OCI-LY7 (cell line): ENCODE measurements at regions of chr10 and their contacts with region 1.

Region 1: DNA sequence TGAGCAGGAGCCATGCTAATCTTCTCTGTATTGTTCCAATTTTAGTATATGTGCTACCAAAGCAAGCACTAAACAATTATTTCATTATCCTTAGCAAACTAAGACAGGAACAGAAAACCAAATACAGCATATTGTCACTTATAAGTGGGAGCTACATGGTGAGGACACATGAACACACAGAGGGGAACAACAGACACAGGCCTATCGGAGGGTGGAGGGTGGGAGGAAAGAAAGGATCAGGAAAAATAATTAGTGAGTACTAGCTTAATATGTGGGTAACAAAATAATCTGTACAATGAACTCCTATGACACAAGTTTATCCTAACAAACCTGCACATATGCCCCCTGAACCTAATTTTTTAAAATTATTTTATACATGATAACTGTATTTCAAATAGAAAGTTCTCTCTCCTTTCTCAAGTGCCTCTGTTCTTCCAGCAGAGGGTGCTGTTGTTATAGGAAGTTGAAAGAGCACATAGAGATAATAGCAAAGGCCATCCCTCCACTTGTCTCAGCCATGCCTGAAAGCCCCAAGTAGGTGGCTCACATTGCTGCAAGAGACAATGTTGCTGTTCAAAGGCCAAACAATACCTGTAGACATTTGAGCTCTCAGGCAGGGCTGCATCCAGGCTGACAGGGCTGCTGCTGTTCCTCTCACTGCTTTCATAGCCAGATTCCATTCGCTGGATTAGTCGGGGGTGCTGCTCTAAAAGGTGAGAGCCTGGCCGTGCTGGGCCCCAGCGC is 33.4 kb upstream of the PPP3CB start:
- DNase-seq: peak; percentile 84
- H3K4me3 ChIP-seq: no peak overlapping the region
- H3K27ac ChIP-seq: no peak overlapping the region
- H3K4me1 ChIP-seq: no peaks in the 10 kb centered on the region
- CTCF ChIP-seq: peak; percentile 96

Region 2: DNA sequence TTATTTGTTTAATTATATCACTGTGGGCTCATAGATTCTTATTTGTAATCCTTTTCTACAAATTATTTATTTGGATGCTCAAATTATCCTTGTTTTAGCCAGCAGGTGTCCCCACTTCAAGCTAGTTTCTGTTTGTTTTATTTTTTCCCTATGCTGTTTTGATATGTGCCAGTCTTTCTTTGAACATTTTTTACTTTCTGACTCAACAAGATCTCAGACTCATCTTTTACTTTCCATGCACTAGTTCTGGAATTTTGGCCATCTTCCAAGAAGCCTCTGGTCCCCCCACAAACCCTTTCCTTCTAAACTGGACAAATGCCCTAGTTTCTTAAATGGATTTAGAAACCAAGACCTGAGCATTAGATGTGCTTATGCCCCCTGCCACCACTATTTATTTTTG is 265.3 kb before region 1 on chr10:
- CTCF ChIA-PET with region 1: no interaction called
- POLR2A ChIA-PET with region 1: no interaction called
- intact Hi-C with region 1: loop called (anchors 10 kb)
- DNase-seq: peak; percentile 37
- H3K4me3 ChIP-seq: no peak overlapping the region
- H3K27ac ChIP-seq: no peak overlapping the region
- H3K4me1 ChIP-seq: no peaks in the 10 kb centered on the region
- CTCF ChIP-seq: peak; percentile 90

Region 3: DNA sequence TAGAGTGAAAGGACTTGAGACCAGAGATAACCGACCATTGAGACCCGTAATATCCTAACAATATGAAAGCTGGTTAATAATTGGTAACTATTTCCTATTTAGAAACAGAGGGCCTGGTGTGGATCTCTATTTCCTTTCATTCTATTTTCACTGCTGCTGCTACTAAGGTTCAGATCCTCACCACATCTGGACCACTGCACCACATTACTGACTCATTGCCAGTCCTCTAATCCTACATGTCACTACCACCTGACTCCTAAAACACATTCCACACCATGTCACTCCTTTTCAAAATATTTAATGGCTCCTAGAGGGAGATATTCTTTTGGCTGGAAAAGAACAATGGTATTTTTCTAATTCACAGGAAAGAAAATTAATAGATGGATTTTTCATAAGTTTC is 55.5 kb after region 1 on chr10:
- CTCF ChIA-PET with region 1: no interaction called
- POLR2A ChIA-PET with region 1: no interaction called
- intact Hi-C with region 1: no loop called
- DNase-seq: no peak
- H3K4me3 ChIP-seq: no peak overlapping the region
- H3K27ac ChIP-seq: no peak overlapping the region
- H3K4me1 ChIP-seq: no peaks in the 10 kb centered on the region
- CTCF ChIP-seq: no peak

Region 4: DNA sequence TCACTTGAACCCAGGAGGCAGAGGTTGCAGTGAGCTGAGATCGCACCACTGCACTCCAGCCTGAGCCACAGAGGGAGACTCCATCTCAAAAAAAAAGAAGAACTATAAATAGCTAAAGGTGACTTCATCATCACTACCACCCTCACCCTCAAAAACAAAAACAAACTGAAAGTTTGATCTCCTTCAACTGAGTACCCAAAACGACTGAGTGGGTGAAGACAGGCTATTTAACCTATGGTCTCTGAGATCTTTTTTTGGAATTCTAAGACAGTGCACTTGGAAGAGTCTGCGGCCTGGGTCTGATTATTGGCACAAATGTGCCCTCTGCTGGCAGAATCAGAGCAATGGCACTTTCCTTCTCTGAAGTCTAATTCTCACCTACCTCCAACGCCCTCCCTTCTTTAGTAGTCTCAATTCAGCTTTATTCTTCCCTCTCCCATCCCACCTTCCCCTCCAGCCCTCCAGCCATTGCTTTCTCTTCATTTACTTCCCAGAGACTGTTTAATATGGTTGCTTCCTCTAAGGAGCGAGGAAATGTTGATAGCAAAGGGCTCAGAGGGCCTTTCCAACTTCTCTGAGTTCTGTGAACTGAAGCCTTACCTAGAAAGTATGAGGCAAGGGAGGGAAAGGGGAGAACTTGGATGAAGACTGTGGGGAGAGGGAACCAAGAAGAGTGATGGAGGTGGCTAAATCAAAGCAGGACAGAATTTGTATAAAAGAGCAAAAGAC is 114.9 kb after region 1 on chr10:
- CTCF ChIA-PET with region 1: interaction called, 9 read pairs
- POLR2A ChIA-PET with region 1: interaction called, 5 read pairs
- intact Hi-C with region 1: loop called (anchors 1 kb)
- DNase-seq: peak; percentile 77
- H3K4me3 ChIP-seq: no peak overlapping the region
- H3K27ac ChIP-seq: no peak overlapping the region
- H3K4me1 ChIP-seq: peaks cover 5% of the 10 kb centered on the region
- CTCF ChIP-seq: peak; percentile 98

Region 5: DNA sequence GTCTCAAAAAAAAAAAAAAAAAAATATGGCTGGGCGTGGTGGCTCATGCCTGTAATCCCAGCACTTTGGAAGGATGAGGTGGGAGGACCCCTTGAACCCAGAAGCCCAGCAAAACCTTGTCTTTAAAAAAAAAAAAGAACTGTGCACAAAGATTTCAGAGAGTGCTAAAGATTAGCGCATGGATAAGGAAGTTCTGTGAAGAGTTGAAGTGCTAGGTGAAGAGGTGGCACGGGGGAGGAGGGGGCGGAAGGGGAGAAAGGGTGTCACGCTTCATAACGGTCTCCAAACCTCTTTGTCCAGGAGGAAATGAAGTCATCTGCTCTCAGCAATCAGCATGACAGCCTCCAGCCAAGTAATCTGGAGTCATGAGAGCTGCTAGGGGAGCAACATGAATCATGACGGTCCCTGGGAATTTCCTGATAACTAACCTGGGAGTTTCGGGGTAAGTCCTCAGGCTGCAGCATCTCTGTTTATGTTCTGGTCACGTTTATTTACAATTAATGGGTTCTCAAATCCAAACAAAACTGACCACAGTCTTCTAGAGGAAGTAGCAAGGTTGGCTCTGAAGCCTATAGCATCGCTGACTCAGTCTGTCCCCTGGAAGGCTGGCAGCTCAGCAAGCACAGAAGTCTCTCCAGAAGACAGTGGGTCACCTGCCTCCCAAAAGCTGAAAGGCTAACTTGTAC is 379.7 kb after region 1 on chr10:
- CTCF ChIA-PET with region 1: no interaction called
- POLR2A ChIA-PET with region 1: no interaction called
- intact Hi-C with region 1: no loop called
- DNase-seq: peak; percentile 70
- H3K4me3 ChIP-seq: peak overlapping the region; percentile 68
- H3K27ac ChIP-seq: peak overlapping the region; percentile 61
- H3K4me1 ChIP-seq: peaks cover 39% of the 10 kb centered on the region
- CTCF ChIP-seq: no peak